H1 (cell line): ENCODE measurements at regions of chr3 and their contacts with region 1.

Region 1: GRCh38 chr3:4712143-4712542 is 219.0 kb downstream of the ITPR1 start:
- DNase-seq: no peak
- H3K4me3 ChIP-seq: no peak overlapping the region
- H3K27ac ChIP-seq: no peak overlapping the region
- H3K4me1 ChIP-seq: peaks cover 0 to 13% (median 8%) of the 10 kb centered on the region in 4 experiments; a peak in 5 of 7 replicates
- H3K27me3 ChIP-seq: no peaks in the 10 kb centered on the region
- CTCF ChIP-seq: no peak
- EP300 ChIP-seq: no peak
- POLR2A ChIP-seq: no peak
- RAD21 ChIP-seq: no peak

Region 2: GRCh38 chr3:4656059-4656458 is 56.1 kb before region 1 on chr3:
- CTCF ChIA-PET with region 1: interaction called, 11 read pairs
- POLR2A ChIA-PET with region 1: interaction called, 4 read pairs
- DNase-seq: peak; percentile 44 to 64
- H3K4me3 ChIP-seq: no peak overlapping the region
- H3K27ac ChIP-seq: no peak overlapping the region
- H3K4me1 ChIP-seq: peaks cover 0 to 3% (median under 1%) of the 10 kb centered on the region in 4 experiments; a peak in 2 of 7 replicates
- H3K27me3 ChIP-seq: no peaks in the 10 kb centered on the region
- CTCF ChIP-seq: peak; percentile 87 to 98 (median 97)
- EP300 ChIP-seq: no peak
- POLR2A ChIP-seq: no peak
- RAD21 ChIP-seq: peak; percentile 98

Region 3: GRCh38 chr3:4687167-4687566 is 25.0 kb before region 1 on chr3:
- CTCF ChIA-PET with region 1: interaction called, 13 read pairs
- POLR2A ChIA-PET with region 1: no interaction called
- DNase-seq: no peak
- H3K4me3 ChIP-seq: no peak overlapping the region
- H3K27ac ChIP-seq: no peak overlapping the region
- H3K4me1 ChIP-seq: no peaks in the 10 kb centered on the region
- H3K27me3 ChIP-seq: no peaks in the 10 kb centered on the region; a peak in 1 of 7 replicates
- CTCF ChIP-seq: no peak
- EP300 ChIP-seq: no peak
- POLR2A ChIP-seq: no peak
- RAD21 ChIP-seq: no peak

Region 4: DNA sequence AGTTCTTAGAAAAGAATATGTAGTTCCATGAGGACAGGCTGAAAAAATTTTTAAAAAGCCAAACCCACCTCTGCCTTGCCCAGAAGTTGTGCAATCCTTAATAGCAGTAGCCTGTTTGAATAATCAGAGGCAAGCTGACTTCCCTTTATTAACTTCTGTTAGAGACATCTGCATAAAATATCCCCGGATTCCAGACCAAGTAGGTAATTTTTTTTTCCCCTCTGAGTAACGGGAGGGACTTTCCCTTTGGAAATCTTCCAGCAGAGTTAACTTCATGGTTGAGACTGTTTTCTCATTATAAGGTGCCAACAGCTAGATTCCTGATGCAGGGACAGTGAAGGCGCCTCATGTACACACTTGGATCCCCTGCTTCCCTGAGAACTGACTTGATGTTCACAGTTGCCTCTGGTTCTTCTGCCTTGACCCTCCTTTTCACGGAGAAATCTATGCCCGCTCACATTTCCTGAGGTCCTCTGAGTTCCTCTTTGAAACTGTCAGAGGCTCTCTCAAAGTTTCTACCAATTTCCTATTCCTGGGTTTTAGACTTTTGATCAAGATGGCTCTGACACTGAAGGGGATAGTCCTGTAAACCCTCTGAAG is 39.5 kb after region 1 on chr3:
- CTCF ChIA-PET with region 1: interaction called, 10 read pairs
- POLR2A ChIA-PET with region 1: no interaction called
- DNase-seq: no peak
- H3K4me3 ChIP-seq: no peak overlapping the region
- H3K27ac ChIP-seq: no peak overlapping the region
- H3K4me1 ChIP-seq: peaks cover 0 to 3% (median 3%) of the 10 kb centered on the region in 4 experiments; a peak in 3 of 7 replicates
- H3K27me3 ChIP-seq: no peaks in the 10 kb centered on the region
- CTCF ChIP-seq: no peak
- EP300 ChIP-seq: no peak
- POLR2A ChIP-seq: no peak
- RAD21 ChIP-seq: no peak

Region 5: DNA sequence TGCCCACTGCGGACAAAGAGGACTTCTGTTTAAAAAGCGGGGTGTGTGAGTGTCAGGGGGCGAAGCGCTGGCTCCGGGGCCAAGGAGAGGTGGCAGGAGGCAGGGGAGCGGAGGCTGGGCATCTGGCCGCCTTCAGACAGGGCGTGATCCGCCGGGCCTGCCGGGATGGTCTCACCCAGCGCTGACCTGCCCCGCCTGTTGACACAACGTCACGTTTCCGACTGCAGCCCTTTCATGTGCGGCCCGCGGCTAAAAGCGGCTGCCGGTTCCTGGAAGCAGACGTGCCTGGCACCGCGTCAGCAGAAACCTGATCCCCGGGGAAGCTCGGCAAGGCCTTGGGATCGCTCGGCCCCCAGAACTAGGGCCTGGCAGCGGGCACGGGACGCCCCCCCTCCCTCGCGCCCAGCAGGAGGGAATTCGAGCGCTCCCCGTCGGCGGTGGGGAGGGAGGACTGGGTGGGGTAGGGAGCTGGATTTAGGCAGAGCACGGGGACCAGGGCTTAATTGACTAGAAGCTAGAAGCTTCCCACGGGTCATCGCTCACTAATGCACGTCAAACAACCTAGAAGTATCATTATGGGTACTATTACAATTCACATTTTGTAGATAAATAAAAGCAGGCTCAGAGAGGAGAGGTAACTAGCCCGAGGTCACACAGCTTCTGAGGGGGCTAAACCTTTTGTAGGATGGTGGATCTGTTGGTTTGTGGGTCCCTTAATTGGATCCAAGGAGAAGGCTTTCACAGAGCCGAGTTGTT is 274.8 kb after region 1 on chr3:
- CTCF ChIA-PET with region 1: interaction called, 14 read pairs
- POLR2A ChIA-PET with region 1: no interaction called
- DNase-seq: peak; percentile 85 to 90
- H3K4me3 ChIP-seq: peak overlapping the region; percentile 40 to 67 (median 60)
- H3K27ac ChIP-seq: no peak overlapping the region
- H3K4me1 ChIP-seq: peaks cover 0 to 8% (median 5%) of the 10 kb centered on the region in 4 experiments; a peak in 4 of 7 replicates
- H3K27me3 ChIP-seq: peaks cover 0 to 7% (median 6%) of the 10 kb centered on the region in 4 experiments; a peak in 4 of 7 replicates
- CTCF ChIP-seq: no peak
- EP300 ChIP-seq: peak in 1 of 2 experiments; percentile 52; a peak in 1 of 3 replicates
- POLR2A ChIP-seq: peak in 1 of 2 experiments; percentile 42; a peak in 1 of 3 replicates
- RAD21 ChIP-seq: 0 out of 4 replicates have a peak, but pooled peaks of 1 of the 2 experiments have one; percentile 10

Region 6: GRCh38 chr3:5016218-5017161 is 304.3 kb after region 1 on chr3:
- CTCF ChIA-PET with region 1: interaction called, 13 read pairs
- POLR2A ChIA-PET with region 1: no interaction called
- DNase-seq: no peak
- H3K4me3 ChIP-seq: no peak overlapping the region
- H3K27ac ChIP-seq: no peak overlapping the region
- H3K4me1 ChIP-seq: peaks cover 0 to 2% (median 0%) of the 10 kb centered on the region in 4 experiments; a peak in 3 of 7 replicates
- H3K27me3 ChIP-seq: no peaks in the 10 kb centered on the region
- CTCF ChIP-seq: no peak
- EP300 ChIP-seq: no peak
- POLR2A ChIP-seq: no peak
- RAD21 ChIP-seq: no peak

Region 7: DNA sequence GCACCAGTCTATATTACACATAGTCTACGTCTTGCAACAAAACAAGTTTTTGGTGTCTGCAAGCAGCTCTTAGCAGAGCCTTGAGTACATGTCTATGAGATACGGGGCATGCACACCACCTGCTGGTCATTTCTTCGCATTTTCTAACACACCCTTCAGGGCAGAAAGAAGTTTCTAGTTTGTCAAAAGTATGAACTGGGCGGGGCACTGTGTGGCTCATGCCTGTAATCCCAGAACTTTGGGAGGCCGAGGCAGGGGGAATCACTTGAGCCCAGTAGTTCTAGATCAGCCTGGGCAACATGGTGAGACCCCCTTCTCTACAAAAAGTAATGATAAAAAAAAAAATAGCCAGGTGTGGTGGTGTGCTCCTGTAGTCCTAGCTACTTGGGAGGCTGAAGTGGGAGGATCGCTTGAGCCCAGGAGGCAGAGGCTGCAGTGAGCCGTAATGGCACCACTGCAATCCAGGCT is 345.7 kb after region 1 on chr3:
- CTCF ChIA-PET with region 1: interaction called, 23 read pairs
- POLR2A ChIA-PET with region 1: no interaction called
- DNase-seq: peak in 1 of 2 experiments; percentile 5
- H3K4me3 ChIP-seq: no peak overlapping the region
- H3K27ac ChIP-seq: no peak overlapping the region
- H3K4me1 ChIP-seq: no peaks in the 10 kb centered on the region
- H3K27me3 ChIP-seq: no peaks in the 10 kb centered on the region
- CTCF ChIP-seq: peak in 2 of 3 experiments; percentile 51 to 54; a peak in 3 of 4 replicates
- EP300 ChIP-seq: no peak
- POLR2A ChIP-seq: no peak
- RAD21 ChIP-seq: peak; percentile 67 to 72